ENCODE measurements at regions of chr14 and their contacts with region 1.

Region 1: DNA sequence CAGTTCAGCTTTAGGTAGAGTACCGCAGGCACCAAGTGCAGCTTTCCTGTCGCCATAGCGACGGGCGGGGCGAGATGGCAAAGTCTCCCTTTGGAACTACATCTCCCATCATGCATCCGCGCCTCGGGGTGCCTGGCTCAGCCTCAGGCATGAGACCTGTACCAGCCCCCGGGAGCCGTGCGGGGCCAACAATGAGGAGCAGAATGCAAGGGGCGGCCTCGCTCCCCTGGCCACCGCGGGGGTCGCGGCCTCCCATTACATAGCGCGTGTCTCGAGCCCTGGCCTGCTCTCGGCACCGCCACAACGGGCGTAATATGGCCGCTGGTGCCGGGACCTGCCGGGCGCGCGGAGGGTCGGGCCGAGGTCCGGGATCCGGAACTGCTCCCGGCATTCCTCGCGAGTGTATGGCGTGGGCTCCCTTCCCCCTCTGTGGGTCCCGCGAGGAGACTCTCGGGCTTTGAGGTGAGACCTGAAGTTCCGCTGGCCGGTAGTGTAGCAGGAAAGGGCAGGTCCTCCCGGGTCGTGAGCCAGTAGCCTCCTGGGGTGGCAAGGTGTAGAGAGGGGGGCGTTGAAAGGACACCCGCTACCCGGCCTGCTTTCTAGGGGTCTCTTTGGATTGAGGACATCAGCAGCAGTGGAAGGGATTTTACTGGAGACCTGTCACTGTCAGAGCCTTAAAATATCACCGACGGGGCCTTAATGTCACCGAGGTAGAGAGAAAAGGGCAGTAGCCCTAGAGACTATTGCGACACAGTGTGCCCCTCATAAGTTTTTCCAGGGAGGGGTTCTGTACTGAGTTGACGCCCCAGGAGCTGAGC is at the start of gene THTPA:
- DNase-seq: peak; percentile 96
- H3K4me3 Mint-ChIP-seq: peak within 1 kb of the TSS; percentile 95
- H3K27ac Mint-ChIP-seq: peak within 1 kb of the TSS; percentile 94
- H3K4me1 Mint-ChIP-seq: peaks cover 38% of the 10 kb centered on the region
- H3K27me3 Mint-ChIP-seq: no peaks in the 10 kb centered on the region
- total RNA-seq, gene THTPA: 6.2 to 6.6 TPM

Region 2: DNA sequence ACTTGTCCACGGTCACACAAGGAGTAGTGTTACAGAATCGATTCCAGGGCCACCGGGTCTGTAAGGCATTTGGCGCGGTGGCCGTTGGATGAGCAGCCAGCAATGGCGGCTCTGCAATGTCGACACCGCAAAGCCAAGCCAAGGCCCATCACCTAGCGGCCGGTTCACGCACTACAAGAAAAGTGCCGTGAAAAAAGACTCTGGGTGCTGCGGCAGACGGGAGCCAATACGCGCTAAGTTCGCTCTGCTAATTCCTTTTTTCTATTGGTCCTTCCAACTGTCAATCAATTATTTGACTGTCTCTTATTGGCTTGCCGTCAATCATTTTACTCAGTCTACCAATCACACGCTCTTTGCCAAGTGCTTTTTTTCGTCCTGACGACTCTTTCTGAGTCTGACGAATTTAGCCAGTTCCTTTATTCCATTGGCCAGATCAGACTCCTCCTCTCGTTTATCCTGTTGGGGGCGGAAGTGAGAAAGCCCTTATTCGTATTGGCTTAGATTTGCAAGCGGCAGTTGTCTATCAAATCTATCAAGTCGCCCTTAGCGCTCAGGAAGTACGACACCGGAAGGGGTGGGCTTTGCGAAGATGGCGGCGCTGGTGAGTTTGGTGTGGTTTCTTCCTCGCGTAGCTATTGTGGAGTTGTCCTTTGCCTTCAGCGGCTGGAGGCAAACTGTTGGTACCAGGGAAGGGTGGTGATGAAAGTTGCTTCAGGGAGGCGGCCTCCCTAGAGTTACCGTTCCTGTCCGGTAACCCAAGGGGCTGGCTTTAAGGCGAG is 86.8 kb before region 1 on chr14 and contains the start of gene NGDN:
- CTCF ChIA-PET with region 1: interaction called, 209 read pairs
- intact Hi-C with region 1: loop called (anchors 1 kb)
- DNase-seq: peak; percentile 96
- H3K4me3 Mint-ChIP-seq: no peak within 1 kb of the TSS
- H3K27ac Mint-ChIP-seq: no peak within 1 kb of the TSS
- H3K4me1 Mint-ChIP-seq: peaks cover 11% of the 10 kb centered on the region
- H3K27me3 Mint-ChIP-seq: no peaks in the 10 kb centered on the region
- total RNA-seq, gene NGDN: 38.9 to 40.8 TPM

Region 3: DNA sequence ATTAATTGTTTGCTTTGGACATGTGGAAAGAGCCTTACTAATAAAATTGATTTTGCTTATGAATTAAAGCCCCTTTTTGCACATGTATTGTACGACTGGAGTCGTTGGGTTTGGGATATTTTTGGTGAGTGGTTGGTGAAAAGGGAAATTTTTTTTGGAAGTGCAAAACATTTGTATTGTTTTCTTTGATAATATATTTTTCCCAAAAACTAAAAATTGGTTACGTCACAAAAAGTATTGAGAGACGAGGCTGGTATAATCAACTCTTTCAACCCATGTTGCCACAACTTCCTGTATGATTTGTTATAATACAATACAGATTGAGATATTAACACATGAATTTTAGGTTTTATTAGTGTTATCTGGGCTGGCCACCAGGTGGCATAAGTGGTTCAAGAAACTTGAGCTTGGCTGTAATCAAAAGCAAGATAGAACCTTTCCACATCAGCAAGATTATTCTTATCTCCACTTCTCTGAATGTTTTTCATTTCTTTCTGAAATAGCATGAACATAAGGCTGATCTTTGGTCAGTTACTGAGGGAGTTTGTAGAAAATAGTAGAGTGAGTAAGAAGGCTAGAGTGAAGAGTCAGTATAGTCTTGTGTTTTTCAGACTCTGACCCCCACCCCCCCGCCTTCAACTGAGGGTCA is 77.9 kb before region 1 on chr14:
- CTCF ChIA-PET with region 1: interaction called, 209 read pairs
- intact Hi-C with region 1: no loop called
- DNase-seq: peak; percentile 80
- H3K4me3 Mint-ChIP-seq: no peak overlapping the region
- H3K27ac Mint-ChIP-seq: no peak overlapping the region
- H3K4me1 Mint-ChIP-seq: peaks cover 7% of the 10 kb centered on the region
- H3K27me3 Mint-ChIP-seq: no peaks in the 10 kb centered on the region

Region 4: DNA sequence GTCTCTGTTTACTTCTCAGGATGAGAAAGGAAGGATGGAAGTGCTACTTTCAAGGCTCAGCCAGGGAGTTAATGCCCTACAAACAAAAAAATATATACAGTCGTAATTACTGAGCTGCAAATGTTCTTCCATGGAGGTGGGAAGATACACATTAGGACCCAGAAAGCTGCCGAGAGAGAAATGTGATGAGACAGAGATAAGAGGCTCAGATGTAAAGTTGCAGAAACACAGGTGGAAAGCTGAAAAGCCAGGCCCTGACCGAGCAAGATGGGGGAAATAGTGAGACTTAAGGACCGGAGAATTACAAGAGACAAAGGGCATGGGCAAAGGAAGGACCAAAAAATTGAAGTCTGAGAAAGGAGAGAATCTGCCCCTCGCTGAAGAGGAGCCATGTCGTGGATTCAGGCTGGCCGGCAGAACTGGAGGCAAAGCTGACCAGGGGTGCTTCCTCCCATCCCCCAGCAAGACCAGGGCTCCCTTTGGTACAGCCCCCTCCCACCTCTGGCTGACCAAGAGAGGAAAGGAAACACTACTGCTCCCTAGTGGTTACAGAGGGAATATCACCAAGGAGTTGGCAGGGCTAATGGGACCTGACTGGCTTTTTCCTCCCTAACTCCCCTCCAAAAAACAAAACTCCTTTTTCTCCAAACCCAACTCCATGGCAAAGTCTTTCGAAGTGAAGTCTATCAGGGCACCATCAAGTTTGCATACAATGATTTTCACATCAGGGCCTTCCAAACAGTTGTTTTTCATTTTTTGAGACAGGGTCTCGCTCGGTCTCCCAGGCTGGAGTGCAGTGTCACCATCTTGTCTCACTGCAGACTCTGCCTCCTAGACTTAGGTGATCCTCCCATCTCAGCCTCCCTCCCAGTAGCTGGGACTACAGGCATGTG is 16.6 kb before region 1 on chr14:
- CTCF ChIA-PET with region 1: interaction called, 44 read pairs
- intact Hi-C with region 1: no loop called
- DNase-seq: peak; percentile 26
- H3K4me3 Mint-ChIP-seq: no peak overlapping the region
- H3K27ac Mint-ChIP-seq: no peak overlapping the region
- H3K4me1 Mint-ChIP-seq: no peaks in the 10 kb centered on the region
- H3K27me3 Mint-ChIP-seq: no peaks in the 10 kb centered on the region